Posterior vena cava (tissue), 2 donors: ENCODE measurements at regions of chr2 and their contacts with region 1.

Region 1: GRCh38 chr2:55056024-55056521 is 5.8 kb upstream of the RTN4 start:
- DNase-seq: no peak

Region 2: GRCh38 chr2:55099878-55100820 is 44.1 kb after region 1 on chr2:
- intact Hi-C with region 1: loop called (anchors 5 to 10 kb)
- DNase-seq: no peak

Region 3: GRCh38 chr2:55327470-55328230 is 271.6 kb after region 1 on chr2:
- intact Hi-C with region 1: no loop called
- DNase-seq: no peak